Activated CD4-positive, alpha-beta T cell treated with anti-CD3 and anti-CD28 coated beads for 36 hours (primary cell): ENCODE measurements at regions of chr1 and their contacts with region 1.

Region 1: GRCh38 chr1:84143796-84144565 is at the start of gene PRKACB:
- DNase-seq: no peak
- ATAC-seq: peak; percentile 89
- H3K4me3 Mint-ChIP-seq: peak within 1 kb of the TSS; percentile 85
- H3K27ac Mint-ChIP-seq: peak within 1 kb of the TSS; percentile 98
- H3K4me1 Mint-ChIP-seq: peaks cover 40% of the 10 kb centered on the region
- H3K27me3 Mint-ChIP-seq: no peaks in the 10 kb centered on the region
- total RNA-seq, gene PRKACB: 22.2 to 25.5 TPM

Region 2: DNA sequence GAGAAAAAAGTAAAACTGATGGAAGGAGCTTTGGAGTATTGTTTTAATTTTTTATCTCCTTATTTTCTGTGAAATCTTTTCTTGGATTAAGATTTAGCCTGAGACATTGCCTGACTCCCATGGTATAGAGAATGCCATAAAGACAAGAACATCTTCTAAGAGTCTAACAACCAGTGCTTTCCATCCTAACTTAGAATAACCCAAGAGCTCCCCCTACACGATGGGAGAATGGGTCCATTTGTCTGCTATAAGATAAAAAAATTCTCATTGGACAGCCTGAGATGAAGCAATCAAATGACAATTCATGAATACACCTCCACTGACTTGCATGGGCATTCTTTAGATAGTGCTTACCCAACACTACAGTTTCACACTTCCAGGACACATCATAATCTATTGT is 623.2 kb before region 1 on chr1:
- CTCF ChIA-PET with region 1: no interaction called
- POLR2A ChIA-PET with region 1: no interaction called
- intact Hi-C with region 1: no loop called
- DNase-seq: no peak
- ATAC-seq: peak; percentile 26
- H3K4me3 Mint-ChIP-seq: no peak overlapping the region
- H3K27ac Mint-ChIP-seq: no peak overlapping the region
- H3K4me1 Mint-ChIP-seq: peaks cover 10% of the 10 kb centered on the region
- H3K27me3 Mint-ChIP-seq: no peaks in the 10 kb centered on the region

Region 3: DNA sequence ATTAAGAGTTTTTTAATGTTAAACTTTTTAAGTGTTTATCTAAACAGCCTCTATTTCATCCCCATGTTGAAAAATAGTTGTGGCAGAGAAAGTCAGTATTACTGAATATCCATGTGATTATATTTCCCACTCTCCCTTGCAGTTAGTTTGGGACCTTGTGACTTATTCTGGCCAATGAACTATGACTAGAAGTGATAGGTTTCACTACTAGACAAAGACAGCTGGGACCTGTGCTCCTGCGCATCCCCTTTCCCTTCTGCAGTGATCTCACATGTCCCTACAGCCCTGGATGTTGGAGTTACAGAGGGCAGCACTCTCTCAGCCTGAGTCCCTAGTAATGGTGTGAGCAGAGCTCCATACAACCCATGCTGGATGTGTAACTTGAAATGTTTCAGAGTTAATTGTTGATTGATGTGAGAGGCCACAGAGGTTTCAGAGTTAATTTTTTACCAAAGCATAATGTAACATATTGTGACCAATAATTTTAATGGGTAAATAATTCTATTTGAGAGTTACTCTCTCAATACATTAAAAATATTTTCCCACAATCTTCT is 138.9 kb after region 1 on chr1:
- CTCF ChIA-PET with region 1: no interaction called
- POLR2A ChIA-PET with region 1: no interaction called
- intact Hi-C with region 1: no loop called
- DNase-seq: no peak
- ATAC-seq: no peak
- H3K4me3 Mint-ChIP-seq: no peak overlapping the region
- H3K27ac Mint-ChIP-seq: no peak overlapping the region
- H3K4me1 Mint-ChIP-seq: peaks cover 2% of the 10 kb centered on the region
- H3K27me3 Mint-ChIP-seq: peaks cover 13% of the 10 kb centered on the region

Region 4: DNA sequence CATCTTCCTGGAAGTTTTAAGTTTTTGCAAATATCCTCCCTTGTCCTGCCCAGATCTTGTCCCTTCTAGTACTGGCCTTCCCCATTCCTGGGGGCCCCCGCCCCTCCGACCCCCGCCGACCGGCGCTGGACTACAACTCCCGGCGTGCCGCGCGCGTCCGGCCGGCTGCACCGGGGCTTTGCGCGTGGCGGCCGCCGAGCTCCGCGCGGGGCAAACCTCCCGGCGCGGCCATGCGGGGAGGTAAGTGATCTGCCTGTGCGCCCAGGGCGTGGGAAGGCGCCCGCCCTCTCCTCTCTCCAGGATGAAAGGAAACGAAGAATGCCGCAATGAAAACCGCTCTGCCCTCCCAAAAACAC is 154.3 kb after region 1 on chr1:
- CTCF ChIA-PET with region 1: interaction called, 7 read pairs
- POLR2A ChIA-PET with region 1: no interaction called
- intact Hi-C with region 1: loop called in 1 of 2 experiments (anchors 1 kb)
- DNase-seq: peak; percentile 71
- ATAC-seq: peak; percentile 79
- H3K4me3 Mint-ChIP-seq: peak overlapping the region; percentile 78
- H3K27ac Mint-ChIP-seq: peak overlapping the region; percentile 71
- H3K4me1 Mint-ChIP-seq: peaks cover 34% of the 10 kb centered on the region
- H3K27me3 Mint-ChIP-seq: peaks cover 6% of the 10 kb centered on the region

Region 5: DNA sequence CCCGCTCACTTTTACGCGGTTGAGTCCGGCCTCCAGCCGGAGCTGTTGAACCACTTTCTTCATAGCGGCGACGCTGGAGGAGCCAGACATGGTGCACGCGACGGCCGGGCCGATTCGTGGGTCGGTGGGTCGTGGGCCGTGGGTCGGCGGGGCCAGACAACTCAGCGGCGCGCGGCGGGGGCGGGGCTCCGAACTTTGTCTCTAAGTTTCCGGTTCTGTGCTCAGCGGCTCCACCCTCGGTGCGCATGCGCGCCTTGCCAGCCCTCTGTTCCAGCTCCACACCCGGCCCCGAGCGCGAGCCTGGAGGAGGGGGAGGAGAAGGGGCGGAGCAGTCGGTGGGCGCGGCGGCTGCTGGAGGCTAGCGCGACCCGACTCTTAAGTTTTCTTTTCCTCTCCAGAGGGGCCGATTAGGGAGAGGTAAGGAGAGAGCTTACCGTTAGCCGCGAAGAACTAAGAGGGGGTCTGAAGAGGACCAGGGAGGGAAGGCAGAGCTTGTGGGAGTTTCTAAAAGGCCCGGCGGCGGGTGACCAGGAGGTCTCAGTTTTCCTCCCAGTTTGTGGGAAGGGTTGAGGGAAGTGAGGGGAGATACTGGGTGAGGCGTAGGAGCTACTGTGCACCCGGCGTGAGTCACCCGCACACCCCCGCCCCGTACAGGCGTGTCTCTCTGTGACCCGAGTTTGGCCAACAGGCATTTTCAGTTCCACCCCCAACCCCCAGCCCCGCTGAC is 362.2 kb after region 1 on chr1 and contains the starts of genes GNG5 and SPATA1:
- CTCF ChIA-PET with region 1: no interaction called
- POLR2A ChIA-PET with region 1: interaction called, 4 read pairs
- intact Hi-C with region 1: loop called (anchors 2 to 10 kb)
- DNase-seq: peak; percentile 99
- ATAC-seq: peak; percentile 91
- H3K4me3 Mint-ChIP-seq: peak within 1 kb of the TSS; percentile 96
- H3K27ac Mint-ChIP-seq: peak within 1 kb of the TSS; percentile 100
- H3K4me1 Mint-ChIP-seq: peaks cover 29% of the 10 kb centered on the region
- H3K27me3 Mint-ChIP-seq: no peaks in the 10 kb centered on the region
- total RNA-seq, gene GNG5: 124 to 159 TPM
- total RNA-seq, gene SPATA1: 0.61 to 1.4 TPM

Region 6: GRCh38 chr1:84690397-84691121 is 546.6 kb after region 1 on chr1 and contains the start of gene SSX2IP:
- CTCF ChIA-PET with region 1: interaction called, 4 read pairs
- POLR2A ChIA-PET with region 1: no interaction called
- intact Hi-C with region 1: loop called (anchors 2 to 5 kb)
- DNase-seq: peak; percentile 99
- ATAC-seq: peak; percentile 89
- H3K4me3 Mint-ChIP-seq: peak within 1 kb of the TSS; percentile 91
- H3K27ac Mint-ChIP-seq: peak within 1 kb of the TSS; percentile 85
- H3K4me1 Mint-ChIP-seq: peaks cover 57% of the 10 kb centered on the region
- H3K27me3 Mint-ChIP-seq: no peaks in the 10 kb centered on the region
- total RNA-seq, gene SSX2IP: 10.3 to 12.3 TPM

Region 7: DNA sequence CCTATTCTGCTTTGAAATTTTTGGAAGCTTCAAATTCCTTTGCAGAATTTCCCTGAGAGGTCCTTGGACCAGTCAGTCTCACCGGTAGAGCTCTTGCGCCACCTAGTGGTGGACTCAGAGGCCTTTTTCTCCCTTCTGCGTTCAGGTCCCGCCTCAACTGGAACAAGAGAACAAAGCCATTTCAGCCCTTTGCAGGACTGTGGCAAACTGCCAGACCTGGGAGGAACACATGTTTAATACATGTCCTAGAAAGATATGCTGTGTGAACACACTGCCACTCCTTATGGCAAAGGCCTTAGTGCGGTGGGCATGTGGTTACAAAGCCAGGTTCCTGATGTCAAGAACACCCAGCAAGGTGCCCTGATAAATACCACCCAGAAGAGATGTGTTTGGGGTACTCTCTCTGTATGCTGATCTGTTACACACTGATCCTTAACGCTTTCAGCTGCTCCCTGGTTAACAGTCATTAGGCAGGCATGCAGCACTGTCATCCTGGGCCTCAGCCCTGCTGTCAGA is 628.5 kb after region 1 on chr1:
- CTCF ChIA-PET with region 1: interaction called, 5 read pairs
- POLR2A ChIA-PET with region 1: no interaction called
- intact Hi-C with region 1: loop called (anchors 1 to 5 kb)
- DNase-seq: peak; percentile 87
- ATAC-seq: peak; percentile 78
- H3K4me3 Mint-ChIP-seq: no peak overlapping the region
- H3K27ac Mint-ChIP-seq: no peak overlapping the region
- H3K4me1 Mint-ChIP-seq: no peaks in the 10 kb centered on the region
- H3K27me3 Mint-ChIP-seq: peaks cover 2% of the 10 kb centered on the region